Heart right ventricle (tissue), 16 donors: ENCODE measurements at regions of chr5 and their contacts with region 1.

Region 1: GRCh38 chr5:88842784-88843183 is 40.2 kb downstream of the MEF2C start:
- DNase-seq: no peak
- ATAC-seq: no peak
- H3K4me3 ChIP-seq: no peak overlapping the region
- H3K27ac ChIP-seq: peak overlapping the region in 1 of 10 donors; percentile 26
- H3K4me1 ChIP-seq: peaks cover 0 to 92% (median 61%) of the 10 kb centered on the region in 9 donors
- H3K27me3 ChIP-seq: no peaks in the 10 kb centered on the region
- CTCF ChIP-seq: no peak

Region 2: GRCh38 chr5:88875341-88876234 is 32.8 kb after region 1 on chr5:
- intact Hi-C with region 1: loop called in 3 of 10 experiments (anchors 5 to 10 kb)
- DNase-seq: no peak
- ATAC-seq: peak in 7 of 8 donors; percentile 45 to 74 (median 60)
- H3K4me3 ChIP-seq: peak overlapping the region in 6 of 10 donors; percentile 13 to 83 (median 49)
- H3K27ac ChIP-seq: peak overlapping the region in 7 of 10 donors; percentile 20 to 95 (median 87)
- H3K4me1 ChIP-seq: peaks cover 3 to 95% (median 67%) of the 10 kb centered on the region in 9 donors
- H3K27me3 ChIP-seq: no peaks in the 10 kb centered on the region
- CTCF ChIP-seq: no peak